ENCODE measurements at regions of chr9 and their contacts with region 1.

Region 1: GRCh38 chr9:2072752-2073405 is 57.7 kb downstream of the SMARCA2 start:
- DNase-seq: no peak
- H3K4me3 ChIP-seq: no peak overlapping the region
- H3K27ac ChIP-seq: no peak overlapping the region
- H3K4me1 ChIP-seq: no peaks in the 10 kb centered on the region
- H3K27me3 ChIP-seq: no peaks in the 10 kb centered on the region
- CTCF ChIP-seq: no peak

Region 2: DNA sequence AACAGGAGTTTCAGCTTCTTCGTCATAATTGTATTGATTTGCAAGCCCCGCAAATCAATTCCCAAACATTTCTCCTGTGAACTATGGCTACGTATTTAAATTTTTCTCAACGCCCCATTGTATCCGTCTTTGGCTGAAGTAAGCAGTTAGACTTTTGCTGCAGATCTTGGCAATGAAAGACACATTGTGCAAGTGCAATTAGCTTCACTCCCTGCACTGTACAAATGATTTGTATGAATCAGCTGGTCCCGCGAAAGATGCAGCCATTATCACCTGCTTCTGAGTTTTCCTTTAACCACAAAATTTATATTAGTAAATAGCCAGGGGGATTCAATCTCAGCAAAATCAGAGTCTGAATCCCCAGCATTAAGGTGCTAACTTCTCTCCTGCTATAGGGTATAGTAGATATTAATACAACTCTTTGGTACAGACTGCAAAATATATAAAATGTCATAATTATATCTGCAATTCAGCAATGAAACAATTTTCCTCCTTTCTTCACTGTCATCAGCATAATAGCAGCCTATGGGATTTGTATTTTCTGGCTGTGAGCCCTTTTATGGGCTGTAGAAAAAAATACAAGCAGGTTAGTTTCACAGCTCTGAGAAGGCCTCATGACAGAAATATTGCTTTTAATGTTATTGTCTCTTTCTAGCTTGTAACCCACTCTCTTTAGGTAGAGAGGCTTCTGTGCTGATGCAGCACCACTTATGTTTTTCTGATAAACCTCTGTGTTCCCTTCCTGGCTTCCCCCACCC is 126.2 kb before region 1 on chr9:
- CTCF ChIA-PET with region 1: no interaction called
- POLR2A ChIA-PET with region 1: no interaction called
- intact Hi-C with region 1: loop called (anchors 5 kb)
- DNase-seq: no peak
- H3K4me3 ChIP-seq: no peak overlapping the region
- H3K27ac ChIP-seq: no peak overlapping the region
- H3K4me1 ChIP-seq: no peaks in the 10 kb centered on the region
- H3K27me3 ChIP-seq: peaks cover 5% of the 10 kb centered on the region
- CTCF ChIP-seq: no peak

Measured in A673 (cell line).